ENCODE measurements at regions of chr1 and their contacts with region 1.

Region 1: DNA sequence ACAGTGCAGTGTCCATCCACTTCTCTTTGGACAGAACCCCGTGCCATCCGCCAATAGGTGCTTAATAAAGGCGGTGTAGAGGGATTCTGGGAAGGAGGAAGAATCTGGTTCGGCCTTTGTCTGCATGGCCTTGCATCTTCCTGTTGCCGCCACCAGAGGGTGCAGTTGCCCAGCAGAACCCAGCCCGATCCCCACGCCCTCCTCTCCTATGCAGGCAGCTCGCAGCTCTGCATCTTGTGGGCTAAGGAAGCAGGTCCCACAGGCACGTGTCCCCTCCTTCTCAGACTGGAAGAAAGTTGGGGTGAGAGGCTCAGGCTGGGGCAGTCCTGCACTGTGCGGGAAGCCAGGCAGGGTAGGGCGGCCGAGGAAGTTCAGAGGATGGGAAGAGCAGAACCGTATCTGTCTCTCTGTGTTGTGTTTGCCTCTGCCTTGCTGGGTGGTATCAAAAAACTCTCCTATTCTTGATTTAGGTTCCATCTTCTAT is 20.8 kb downstream of the NAV1 start:
- DNase-seq: peak; percentile 71
- ATAC-seq: peak; percentile 95
- H3K4me3 ChIP-seq: no peak overlapping the region
- H3K27ac ChIP-seq: no peak overlapping the region
- H3K4me1 ChIP-seq: peaks cover 3% of the 10 kb centered on the region; the same call in 1 of the 2 replicates
- H3K27me3 ChIP-seq: no peaks in the 10 kb centered on the region
- CTCF ChIP-seq: peak; percentile 82

Region 2: GRCh38 chr1:201696217-201696761 is 136.6 kb after region 1 on chr1:
- CTCF ChIA-PET with region 1: no interaction called
- POLR2A ChIA-PET with region 1: no interaction called
- intact Hi-C with region 1: loop called (anchors 2 kb)
- DNase-seq: peak; percentile 92
- ATAC-seq: peak; percentile 96
- H3K4me3 ChIP-seq: no peak overlapping the region
- H3K27ac ChIP-seq: peak overlapping the region; percentile 57
- H3K4me1 ChIP-seq: peaks cover 21% of the 10 kb centered on the region
- H3K27me3 ChIP-seq: no peaks in the 10 kb centered on the region
- CTCF ChIP-seq: no peak

Region 3: GRCh38 chr1:201703621-201704439 is 144.1 kb after region 1 on chr1:
- CTCF ChIA-PET with region 1: interaction called, 4 read pairs
- POLR2A ChIA-PET with region 1: interaction called, 6 read pairs
- intact Hi-C with region 1: loop called (anchors 1 kb)
- DNase-seq: peak; percentile 78
- ATAC-seq: peak; percentile 97
- H3K4me3 ChIP-seq: no peak overlapping the region
- H3K27ac ChIP-seq: no peak overlapping the region
- H3K4me1 ChIP-seq: no peaks in the 10 kb centered on the region
- H3K27me3 ChIP-seq: no peaks in the 10 kb centered on the region
- CTCF ChIP-seq: peak; percentile 85

Region 4: DNA sequence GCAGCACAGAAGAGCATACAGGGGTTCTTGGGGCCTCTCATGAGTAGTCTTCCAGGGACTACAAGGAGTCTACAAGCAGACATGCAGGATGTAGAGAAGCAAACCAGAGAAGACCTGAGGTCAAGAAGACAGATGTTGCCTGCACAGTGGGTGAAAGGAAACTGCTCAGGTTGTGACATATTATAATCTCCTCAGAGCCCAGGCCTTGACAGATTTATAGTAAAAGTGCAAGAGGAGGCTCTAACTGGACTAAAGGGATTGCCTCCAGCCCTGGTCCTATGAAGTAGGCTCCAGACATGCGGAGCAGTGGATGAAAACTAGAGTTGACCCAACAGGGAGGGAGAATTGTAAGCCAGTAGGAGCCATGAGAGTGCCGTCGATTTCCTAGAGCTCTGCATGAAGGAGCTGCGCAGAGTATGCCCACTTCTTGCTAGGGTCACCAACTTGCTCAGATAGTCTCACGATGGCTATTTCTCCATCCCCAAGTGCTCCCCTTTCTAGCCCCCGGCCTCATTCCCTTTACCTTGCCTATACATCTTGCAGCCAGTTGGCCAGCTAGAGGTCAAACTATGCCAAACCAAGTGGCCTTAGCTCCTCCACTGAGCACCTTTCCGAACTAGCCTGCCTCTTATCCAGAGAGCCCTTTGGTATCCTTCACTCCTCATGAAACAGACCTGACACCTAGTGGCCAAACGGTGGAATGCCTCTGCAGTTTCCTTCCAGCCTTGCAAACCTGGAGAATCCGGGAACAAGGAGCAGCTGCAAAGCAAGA is 233.0 kb after region 1 on chr1:
- CTCF ChIA-PET with region 1: interaction called, 6 read pairs
- POLR2A ChIA-PET with region 1: no interaction called
- intact Hi-C with region 1: loop called (anchors 1 kb)
- DNase-seq: peak; percentile 83
- ATAC-seq: peak; percentile 92
- H3K4me3 ChIP-seq: no peak overlapping the region
- H3K27ac ChIP-seq: no peak overlapping the region
- H3K4me1 ChIP-seq: peaks cover 12% of the 10 kb centered on the region
- H3K27me3 ChIP-seq: no peaks in the 10 kb centered on the region
- CTCF ChIP-seq: peak; percentile 91

Measured in PC-3 (cell line).